ENCODE measurements at regions of chr2 and their contacts with region 1.

Region 1: DNA sequence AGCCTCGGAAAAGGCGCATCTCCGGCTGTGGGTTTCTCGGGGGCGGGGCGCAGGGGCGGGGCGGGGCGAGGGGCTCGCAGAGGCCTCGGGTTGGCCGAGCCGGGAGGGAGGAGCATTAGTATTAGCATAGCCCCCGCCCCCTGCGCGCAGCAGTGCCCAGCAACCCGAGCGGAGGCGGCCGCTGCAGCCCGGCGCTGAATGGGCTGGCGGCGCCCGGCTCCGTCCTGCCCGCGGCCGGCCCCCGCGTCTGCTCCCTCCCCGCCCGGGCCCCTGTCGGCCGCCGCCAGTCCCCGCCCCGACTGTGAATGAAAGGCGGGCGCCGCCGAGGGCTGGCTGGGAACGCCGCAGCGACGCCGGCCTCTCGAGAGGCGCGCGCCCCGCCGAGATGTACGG is at the start of gene EFR3B:
- DNase-seq: peak; percentile 90 to 99 (median 95)

Region 2: GRCh38 chr2:24971536-24972314 is 70.2 kb before region 1 on chr2 and contains the start of gene DNAJC27:
- intact Hi-C with region 1: no loop called
- DNase-seq: peak; percentile 94 to 100 (median 98)

Region 3: GRCh38 chr2:24984912-24985311 is 57.0 kb before region 1 on chr2:
- intact Hi-C with region 1: loop called (anchors 5 kb)
- DNase-seq: peak; percentile 44 to 95 (median 66)

Region 4: DNA sequence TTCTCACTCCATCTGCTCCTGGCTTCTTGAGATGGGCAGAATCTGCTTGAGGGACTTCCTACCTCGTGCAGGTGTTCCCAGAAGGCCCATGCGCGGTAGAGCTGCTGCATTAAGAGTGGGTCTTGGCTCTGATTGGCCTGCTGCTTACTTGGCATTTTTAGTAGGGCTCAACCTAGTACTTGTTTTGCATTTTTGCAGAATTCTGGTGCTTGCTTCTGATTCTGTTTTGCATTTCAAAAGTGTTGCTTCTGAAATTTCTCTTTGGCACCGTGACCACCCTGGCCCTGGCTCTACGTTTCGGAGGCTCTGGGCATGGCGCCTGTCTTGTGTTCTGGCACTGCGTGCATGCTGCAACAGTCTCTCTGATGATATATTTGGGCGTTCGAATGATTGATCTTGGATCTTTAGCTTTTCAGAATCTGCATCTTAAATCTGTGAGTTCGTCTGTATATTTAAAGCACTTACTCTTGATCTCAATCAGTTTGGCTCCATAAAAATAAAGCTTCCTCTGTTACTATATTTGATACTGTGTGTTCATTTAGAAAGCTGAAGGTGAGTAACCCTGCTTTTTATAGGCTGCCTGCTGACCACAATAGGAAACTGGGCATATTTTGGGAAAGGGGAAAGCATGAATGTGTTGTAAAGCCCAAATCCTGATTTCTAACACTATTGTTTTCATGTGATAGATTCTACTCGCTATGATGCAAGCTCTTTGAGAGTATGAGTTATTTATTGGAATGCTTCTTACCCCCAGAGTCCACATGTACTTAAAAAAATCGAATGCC is 22.1 kb after region 1 on chr2:
- intact Hi-C with region 1: loop called (anchors 2 kb)
- DNase-seq: peak; percentile 56 to 95 (median 74)

Region 5: GRCh38 chr2:25088817-25089516 is 47.0 kb after region 1 on chr2:
- intact Hi-C with region 1: no loop called
- DNase-seq: no peak

Measured in posterior cingulate gyrus (tissue), 11 donors.